ENCODE measurements at regions of chr22 and their contacts with region 1.

Region 1: GRCh38 chr22:39117585-39118191 is 20.6 kb downstream of the APOBEC3H start:
- DNase-seq: peak; percentile 30 to 68 (median 38)
- ATAC-seq: peak; percentile 58; the same call in 2 of the 3 replicates
- H3K4me3 ChIP-seq: no peak overlapping the region
- H3K27ac ChIP-seq: no peak overlapping the region
- H3K4me1 ChIP-seq: no peaks in the 10 kb centered on the region; a peak in 2 of 5 replicates
- H3K27me3 ChIP-seq: no peaks in the 10 kb centered on the region
- CTCF ChIP-seq: peak; percentile 49 to 66 (median 63); a peak in 5 of 6 replicates
- EP300 ChIP-seq: no peak
- POLR2A ChIP-seq: no peak
- RAD21 ChIP-seq: peak; percentile 42 to 83

Region 2: DNA sequence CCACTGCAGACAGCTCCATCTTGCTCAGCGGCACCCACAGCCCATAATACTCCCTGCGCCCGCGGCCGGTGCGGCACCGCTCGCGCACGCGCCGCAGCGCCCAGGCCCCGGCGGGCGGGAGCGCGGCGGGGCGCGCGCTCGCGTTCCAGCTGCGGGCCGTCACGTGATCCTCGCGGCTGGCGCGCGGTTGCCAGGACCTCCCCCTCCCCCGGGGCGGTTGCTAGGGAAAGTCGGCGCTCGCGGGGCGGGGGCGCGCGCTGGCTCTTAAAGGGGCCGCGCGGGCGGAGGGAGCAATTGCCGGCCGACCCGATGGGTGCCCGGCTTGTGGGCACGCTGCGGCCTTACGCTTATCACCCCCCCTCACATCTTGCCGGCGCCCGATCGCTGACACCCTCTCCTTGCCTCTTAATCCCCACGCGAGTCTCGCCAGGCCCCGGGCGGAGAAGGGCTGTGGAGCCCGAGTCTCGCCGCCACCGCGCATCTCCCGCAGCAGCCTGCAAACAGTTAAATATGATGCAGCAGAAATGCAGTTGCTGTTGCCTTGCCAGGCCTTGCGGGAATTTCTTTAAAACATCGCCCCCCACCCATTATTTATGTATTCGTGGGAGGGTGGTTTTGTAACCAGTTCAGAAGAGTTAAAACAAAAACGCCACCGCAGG is 245.4 kb before region 1 on chr22 and contains the start of gene CBX6:
- CTCF ChIA-PET with region 1: interaction called, 8 read pairs
- POLR2A ChIA-PET with region 1: no interaction called
- in situ Hi-C with region 1: no loop called
- intact Hi-C with region 1: loop called (anchors 1 kb)
- DNase-seq: peak; percentile 92 to 95 (median 93)
- ATAC-seq: peak; percentile 70
- H3K4me3 ChIP-seq: peak within 1 kb of the TSS; percentile 62
- H3K27ac ChIP-seq: peak within 1 kb of the TSS; percentile 68
- H3K4me1 ChIP-seq: peaks cover 13 to 27% of the 10 kb centered on the region in 2 experiments
- H3K27me3 ChIP-seq: peaks cover 0 to 5% of the 10 kb centered on the region in 2 experiments; a peak in 2 of 5 replicates
- CTCF ChIP-seq: no peak
- EP300 ChIP-seq: no peak
- POLR2A ChIP-seq: no peak; the same call in 1 of the 2 replicates
- RAD21 ChIP-seq: no peak
- polyA plus RNA-seq, gene CBX6: 0.75 to 1.2 TPM

Measured in K562 (cell line).